ENCODE measurements at regions of chr4 and their contacts with region 1.

Region 1: GRCh38 chr4:56424697-56425514 is 10.5 kb downstream of the PPAT start:
- DNase-seq: peak; percentile 53
- H3K4me3 Mint-ChIP-seq: no peak overlapping the region
- H3K27ac Mint-ChIP-seq: no peak overlapping the region
- H3K4me1 Mint-ChIP-seq: peaks cover 13% of the 10 kb centered on the region
- H3K27me3 Mint-ChIP-seq: no peaks in the 10 kb centered on the region
- CTCF ChIP-seq: peak; percentile 48

Region 2: DNA sequence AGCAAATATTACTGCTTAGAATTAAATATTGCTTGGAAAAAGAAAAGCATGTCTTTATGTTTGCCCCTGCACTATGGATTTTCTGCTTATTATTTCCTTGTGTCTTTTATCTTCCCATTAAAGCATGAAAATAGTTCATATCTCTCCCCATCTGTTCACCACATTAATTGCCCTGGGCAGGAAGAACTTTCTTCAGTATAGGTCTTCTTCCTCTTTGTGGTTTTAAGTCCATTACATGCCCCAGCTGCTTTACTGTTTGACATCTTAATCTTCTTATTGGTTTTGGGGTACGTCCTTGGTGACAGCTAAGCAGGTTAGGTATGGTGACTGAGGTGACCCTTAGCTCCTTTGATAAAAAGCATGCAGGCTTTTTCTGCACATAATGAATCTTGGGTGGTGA is 195.0 kb before region 1 on chr4:
- CTCF ChIA-PET with region 1: no interaction called
- POLR2A ChIA-PET with region 1: no interaction called
- intact Hi-C with region 1: no loop called
- DNase-seq: no peak
- H3K4me3 Mint-ChIP-seq: no peak overlapping the region
- H3K27ac Mint-ChIP-seq: no peak overlapping the region
- H3K4me1 Mint-ChIP-seq: no peaks in the 10 kb centered on the region
- H3K27me3 Mint-ChIP-seq: no peaks in the 10 kb centered on the region
- CTCF ChIP-seq: no peak

Region 3: DNA sequence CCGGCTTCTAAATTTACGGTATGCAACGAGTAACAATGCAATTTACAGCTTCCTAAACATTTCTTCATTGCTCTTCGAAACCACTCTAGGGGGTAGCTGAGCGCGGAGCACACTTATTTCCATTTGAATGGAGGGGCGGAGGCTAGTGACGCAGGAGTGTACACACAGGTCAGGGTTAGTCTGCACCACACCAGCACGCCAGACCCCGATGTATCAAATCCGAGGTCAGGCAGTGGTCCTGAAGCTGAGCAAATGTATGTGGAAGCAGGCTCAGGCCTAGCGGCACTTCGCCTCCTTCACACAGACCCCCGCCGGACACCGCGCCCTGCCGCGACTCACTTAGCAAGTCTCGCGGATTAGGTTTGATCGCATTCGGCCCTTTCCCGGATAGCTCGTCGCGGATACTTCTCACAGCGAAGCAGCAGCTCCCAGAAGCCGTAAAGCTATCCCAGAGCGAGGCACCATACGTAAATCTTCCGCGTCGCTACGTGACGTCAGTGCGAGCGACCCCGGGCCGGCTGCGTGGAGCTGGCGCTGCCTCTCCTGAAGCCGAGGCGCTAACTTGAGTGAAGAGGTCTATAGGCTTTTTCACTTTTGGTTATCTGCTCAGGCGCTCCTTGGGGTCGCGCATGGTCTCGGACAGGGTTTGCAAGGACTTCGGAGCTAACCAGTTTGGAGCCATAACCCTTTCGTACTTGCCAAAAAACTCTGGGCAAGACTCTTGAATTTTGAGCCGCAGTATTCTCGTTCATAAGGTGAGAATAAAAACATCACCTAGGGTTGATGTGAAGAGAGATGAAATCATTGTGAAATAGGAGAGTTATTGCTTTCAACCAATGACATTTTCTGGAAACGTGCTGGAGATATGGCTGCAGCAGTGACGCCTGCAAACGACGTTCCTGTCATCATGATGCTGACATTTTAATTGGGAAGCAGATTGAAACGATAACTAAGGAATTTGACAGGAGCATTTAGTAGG is 37.6 kb before region 1 on chr4 and contains the start of gene AASDH:
- CTCF ChIA-PET with region 1: interaction called, 7 read pairs
- POLR2A ChIA-PET with region 1: interaction called, 13 read pairs
- intact Hi-C with region 1: no loop called
- DNase-seq: peak; percentile 94
- H3K4me3 Mint-ChIP-seq: peak within 1 kb of the TSS; percentile 96
- H3K27ac Mint-ChIP-seq: peak within 1 kb of the TSS; percentile 99
- H3K4me1 Mint-ChIP-seq: peaks cover 29% of the 10 kb centered on the region
- H3K27me3 Mint-ChIP-seq: no peaks in the 10 kb centered on the region
- CTCF ChIP-seq: no peak
- total RNA-seq, gene AASDH: 10.8 and 12.9 TPM in 2 replicates

Region 4: DNA sequence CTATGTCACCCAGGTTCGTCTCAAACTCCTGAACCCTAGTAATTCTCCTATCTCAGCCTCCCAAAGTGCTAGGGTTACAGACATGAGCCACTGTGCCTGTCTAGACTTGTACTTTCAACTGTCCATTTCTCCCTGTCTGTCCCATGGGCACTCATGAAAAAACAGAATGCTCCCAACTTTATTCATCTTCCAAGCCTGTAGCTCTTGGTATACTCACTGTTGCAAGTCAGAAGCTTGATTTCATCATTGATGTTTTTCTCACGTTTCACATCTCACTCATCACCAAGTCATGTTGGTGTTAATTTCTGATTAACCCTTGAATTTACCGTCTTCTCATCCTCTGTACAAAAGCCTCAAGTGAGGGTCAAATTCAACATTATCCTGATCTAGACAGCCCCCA is 35.2 kb after region 1 on chr4:
- CTCF ChIA-PET with region 1: interaction called, 11 read pairs
- POLR2A ChIA-PET with region 1: no interaction called
- intact Hi-C with region 1: loop called (anchors 5 kb)
- DNase-seq: peak; percentile 38
- H3K4me3 Mint-ChIP-seq: peak overlapping the region; percentile 21
- H3K27ac Mint-ChIP-seq: peak overlapping the region; percentile 72
- H3K4me1 Mint-ChIP-seq: peaks cover 27% of the 10 kb centered on the region
- H3K27me3 Mint-ChIP-seq: no peaks in the 10 kb centered on the region
- CTCF ChIP-seq: no peak

Region 5: DNA sequence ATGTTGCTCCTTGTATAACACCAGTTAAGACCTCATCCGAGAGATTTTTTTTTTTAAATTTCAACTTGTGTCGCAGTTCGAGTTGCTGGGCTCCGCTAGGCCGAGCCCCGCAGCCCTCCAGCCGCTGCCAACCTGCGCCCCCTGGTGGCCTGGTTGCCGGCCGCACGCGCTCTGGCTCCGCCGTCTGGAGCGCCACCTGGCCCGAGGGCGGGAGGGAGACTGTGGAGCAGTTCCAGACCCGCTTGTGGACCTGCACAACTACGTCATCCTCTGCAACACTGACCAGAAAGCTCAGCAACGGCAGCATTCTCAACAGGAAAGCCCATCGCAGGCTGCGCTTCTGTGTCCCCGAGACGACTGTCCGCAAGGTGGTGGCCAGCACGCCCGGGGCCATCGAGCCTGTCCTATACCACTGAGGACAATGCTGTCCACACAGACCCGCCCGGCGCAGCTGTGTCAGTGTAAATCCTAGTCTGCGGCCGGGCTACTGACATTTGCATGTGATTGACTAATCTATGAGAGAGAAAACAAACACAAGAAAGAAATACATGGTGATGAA is 119.7 kb after region 1 on chr4:
- CTCF ChIA-PET with region 1: interaction called, 4 read pairs
- POLR2A ChIA-PET with region 1: no interaction called
- intact Hi-C with region 1: loop called (anchors 1 kb)
- DNase-seq: peak; percentile 77
- H3K4me3 Mint-ChIP-seq: peak overlapping the region; percentile 75
- H3K27ac Mint-ChIP-seq: no peak overlapping the region
- H3K4me1 Mint-ChIP-seq: peaks cover 5% of the 10 kb centered on the region
- H3K27me3 Mint-ChIP-seq: no peaks in the 10 kb centered on the region
- CTCF ChIP-seq: peak; percentile 96

Region 6: GRCh38 chr4:56799824-56800756 is 375.2 kb after region 1 on chr4:
- CTCF ChIA-PET with region 1: interaction called, 6 read pairs
- POLR2A ChIA-PET with region 1: no interaction called
- intact Hi-C with region 1: loop called (anchors 5 kb)
- DNase-seq: peak; percentile 83
- H3K4me3 Mint-ChIP-seq: peak overlapping the region; percentile 84
- H3K27ac Mint-ChIP-seq: peak overlapping the region; percentile 81
- H3K4me1 Mint-ChIP-seq: no peaks in the 10 kb centered on the region
- H3K27me3 Mint-ChIP-seq: no peaks in the 10 kb centered on the region
- CTCF ChIP-seq: peak; percentile 87

Region 7: GRCh38 chr4:56828784-56829535 is 404.1 kb after region 1 on chr4:
- CTCF ChIA-PET with region 1: interaction called, 3 read pairs
- POLR2A ChIA-PET with region 1: no interaction called
- intact Hi-C with region 1: loop called (anchors 10 kb)
- DNase-seq: no peak
- H3K4me3 Mint-ChIP-seq: no peak overlapping the region
- H3K27ac Mint-ChIP-seq: no peak overlapping the region
- H3K4me1 Mint-ChIP-seq: no peaks in the 10 kb centered on the region
- H3K27me3 Mint-ChIP-seq: no peaks in the 10 kb centered on the region
- CTCF ChIP-seq: no peak